ENCODE measurements at regions of chr1 and their contacts with region 1.

Region 1: DNA sequence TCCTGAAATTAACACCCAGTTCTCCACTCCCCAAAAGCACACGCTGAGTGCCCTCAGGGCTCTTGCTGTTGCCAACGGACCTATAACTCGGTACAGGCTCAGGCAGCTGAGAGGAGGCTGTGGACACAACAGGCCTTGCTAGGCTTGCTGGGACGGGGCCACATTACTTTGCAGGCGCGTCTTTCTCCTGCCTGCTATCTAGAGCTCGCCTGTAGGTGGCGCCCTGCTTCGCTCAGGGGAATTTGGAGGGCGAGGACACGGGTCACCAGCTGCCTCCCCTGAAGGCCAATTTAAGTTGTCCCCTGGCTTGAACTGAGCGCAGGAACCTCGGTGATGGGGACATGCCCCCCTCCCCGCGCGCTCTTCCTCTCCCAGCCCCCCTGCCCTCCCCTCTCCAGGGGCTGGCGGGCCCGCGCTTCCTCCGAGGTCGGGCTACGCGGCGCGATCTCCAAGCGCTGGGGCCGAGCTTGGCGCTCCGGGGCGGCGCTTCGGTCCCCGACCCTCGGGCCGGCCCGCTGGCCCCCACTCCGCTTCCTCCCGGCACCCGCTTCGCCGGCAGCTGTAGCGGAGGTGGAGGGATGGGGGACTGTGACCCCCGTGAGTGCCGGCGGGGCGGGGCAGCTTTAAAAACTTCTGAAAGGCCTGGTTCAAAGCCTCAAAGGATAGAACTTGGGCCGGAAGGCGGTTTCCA is 32.4 kb upstream of the NFIA start:
- DNase-seq: peak; percentile 94
- H3K4me3 Mint-ChIP-seq: peak overlapping the region; percentile 71
- H3K27ac Mint-ChIP-seq: no peak overlapping the region
- H3K4me1 Mint-ChIP-seq: peaks cover 24% of the 10 kb centered on the region
- H3K27me3 Mint-ChIP-seq: peaks cover 37% of the 10 kb centered on the region

Region 2: GRCh38 chr1:60298290-60298689 is 751.7 kb before region 1 on chr1:
- CTCF ChIA-PET with region 1: no interaction called
- POLR2A ChIA-PET with region 1: no interaction called
- intact Hi-C with region 1: no loop called
- DNase-seq: no peak
- H3K4me3 Mint-ChIP-seq: no peak overlapping the region
- H3K27ac Mint-ChIP-seq: no peak overlapping the region
- H3K4me1 Mint-ChIP-seq: no peaks in the 10 kb centered on the region
- H3K27me3 Mint-ChIP-seq: no peaks in the 10 kb centered on the region

Region 3: GRCh38 chr1:60911966-60912697 is 137.9 kb before region 1 on chr1:
- CTCF ChIA-PET with region 1: no interaction called
- POLR2A ChIA-PET with region 1: no interaction called
- intact Hi-C with region 1: no loop called
- DNase-seq: no peak
- H3K4me3 Mint-ChIP-seq: no peak overlapping the region
- H3K27ac Mint-ChIP-seq: no peak overlapping the region
- H3K4me1 Mint-ChIP-seq: no peaks in the 10 kb centered on the region
- H3K27me3 Mint-ChIP-seq: peaks cover 9% of the 10 kb centered on the region

Region 4: GRCh38 chr1:60978421-60979357 is 71.3 kb before region 1 on chr1:
- CTCF ChIA-PET with region 1: interaction called, 13 read pairs
- POLR2A ChIA-PET with region 1: interaction called, 4 read pairs
- intact Hi-C with region 1: no loop called
- DNase-seq: peak; percentile 58
- H3K4me3 Mint-ChIP-seq: no peak overlapping the region
- H3K27ac Mint-ChIP-seq: no peak overlapping the region
- H3K4me1 Mint-ChIP-seq: peaks cover 2% of the 10 kb centered on the region
- H3K27me3 Mint-ChIP-seq: peaks cover 3% of the 10 kb centered on the region

Region 5: DNA sequence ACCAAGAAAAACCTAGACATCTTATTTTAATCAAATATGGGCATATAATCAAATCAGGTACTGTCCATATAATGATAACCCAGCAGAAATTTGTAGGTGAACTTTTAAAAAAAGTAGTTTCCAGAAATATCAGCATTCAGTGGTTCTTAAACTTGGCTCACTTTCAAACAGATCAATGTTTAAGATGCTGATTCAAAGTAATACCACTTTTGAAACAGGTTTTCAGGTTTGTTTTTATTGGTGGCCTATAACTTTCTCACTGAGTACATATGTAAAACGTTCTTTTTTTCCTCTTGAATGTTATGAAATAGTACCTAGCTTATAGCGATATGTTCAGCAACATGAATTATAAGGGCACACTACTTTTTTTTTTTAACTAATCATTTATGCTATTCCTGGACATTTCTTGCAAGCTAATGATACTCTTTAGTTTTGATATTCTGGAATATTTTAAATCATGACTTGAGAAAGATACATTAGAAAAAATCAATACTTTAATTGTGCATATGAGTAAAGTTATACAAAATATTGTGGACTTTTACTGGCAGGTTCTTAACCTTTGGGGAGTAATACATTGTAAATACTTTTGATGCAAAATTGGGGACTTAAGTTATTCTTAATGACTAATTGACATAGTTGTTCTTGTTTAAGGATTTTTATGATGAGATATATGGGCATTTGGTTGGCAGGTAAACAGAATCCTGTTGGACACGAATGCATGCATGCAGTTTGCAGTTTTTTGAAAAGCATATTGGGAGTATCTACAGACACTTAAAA is 35.4 kb after region 1 on chr1:
- CTCF ChIA-PET with region 1: interaction called, 16 read pairs
- POLR2A ChIA-PET with region 1: interaction called, 9 read pairs
- intact Hi-C with region 1: no loop called
- DNase-seq: no peak
- H3K4me3 Mint-ChIP-seq: no peak overlapping the region
- H3K27ac Mint-ChIP-seq: no peak overlapping the region
- H3K4me1 Mint-ChIP-seq: peaks cover 25% of the 10 kb centered on the region
- H3K27me3 Mint-ChIP-seq: peaks cover 3% of the 10 kb centered on the region

Region 6: GRCh38 chr1:61264825-61265242 is 214.8 kb after region 1 on chr1:
- CTCF ChIA-PET with region 1: interaction called, 12 read pairs
- POLR2A ChIA-PET with region 1: no interaction called
- intact Hi-C with region 1: loop called (anchors 10 kb)
- DNase-seq: no peak
- H3K4me3 Mint-ChIP-seq: no peak overlapping the region
- H3K27ac Mint-ChIP-seq: no peak overlapping the region
- H3K4me1 Mint-ChIP-seq: peaks cover 25% of the 10 kb centered on the region
- H3K27me3 Mint-ChIP-seq: peaks cover 2% of the 10 kb centered on the region

Region 7: DNA sequence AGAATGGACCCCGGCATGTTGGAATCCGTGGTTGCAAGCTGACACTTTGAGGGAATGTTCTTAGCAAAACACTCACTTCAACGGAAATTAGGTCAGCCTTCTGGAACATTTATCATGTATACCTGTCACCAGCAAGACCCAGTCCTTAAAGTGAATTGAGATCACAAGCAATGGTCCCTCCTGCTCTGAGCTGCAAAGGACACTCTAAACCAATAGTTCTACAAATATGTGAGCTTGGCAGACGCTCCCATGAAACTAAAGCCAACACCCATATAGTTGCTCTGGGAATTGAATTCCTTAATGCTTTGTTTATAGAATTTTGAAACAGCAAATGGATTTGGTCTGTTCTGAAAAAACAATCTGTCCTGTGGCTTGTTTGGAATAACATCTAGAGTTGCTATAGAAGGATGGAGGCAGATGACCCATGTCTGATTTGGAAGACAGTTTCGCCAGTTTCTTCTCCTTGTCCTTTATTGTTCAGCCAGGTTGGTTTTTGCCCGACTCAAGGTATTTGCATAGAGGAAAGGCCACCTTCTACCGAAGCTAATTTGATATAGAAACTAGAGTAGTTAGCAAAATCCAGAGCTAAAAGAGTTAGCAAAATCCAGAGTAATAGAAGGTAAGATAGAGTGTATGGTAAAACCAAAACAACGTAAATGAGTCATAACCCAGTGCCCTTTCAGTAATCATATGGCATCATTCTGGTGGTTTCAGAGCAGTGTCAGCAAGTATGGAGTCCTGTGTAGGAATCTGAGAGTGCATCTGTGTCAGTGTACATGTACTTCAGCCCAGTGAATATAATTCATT is 268.5 kb after region 1 on chr1:
- CTCF ChIA-PET with region 1: interaction called, 10 read pairs
- POLR2A ChIA-PET with region 1: interaction called, 6 read pairs
- intact Hi-C with region 1: no loop called
- DNase-seq: peak; percentile 44
- H3K4me3 Mint-ChIP-seq: peak overlapping the region; percentile 42
- H3K27ac Mint-ChIP-seq: peak overlapping the region; percentile 88
- H3K4me1 Mint-ChIP-seq: peaks cover 48% of the 10 kb centered on the region
- H3K27me3 Mint-ChIP-seq: peaks cover 2% of the 10 kb centered on the region

Region 8: DNA sequence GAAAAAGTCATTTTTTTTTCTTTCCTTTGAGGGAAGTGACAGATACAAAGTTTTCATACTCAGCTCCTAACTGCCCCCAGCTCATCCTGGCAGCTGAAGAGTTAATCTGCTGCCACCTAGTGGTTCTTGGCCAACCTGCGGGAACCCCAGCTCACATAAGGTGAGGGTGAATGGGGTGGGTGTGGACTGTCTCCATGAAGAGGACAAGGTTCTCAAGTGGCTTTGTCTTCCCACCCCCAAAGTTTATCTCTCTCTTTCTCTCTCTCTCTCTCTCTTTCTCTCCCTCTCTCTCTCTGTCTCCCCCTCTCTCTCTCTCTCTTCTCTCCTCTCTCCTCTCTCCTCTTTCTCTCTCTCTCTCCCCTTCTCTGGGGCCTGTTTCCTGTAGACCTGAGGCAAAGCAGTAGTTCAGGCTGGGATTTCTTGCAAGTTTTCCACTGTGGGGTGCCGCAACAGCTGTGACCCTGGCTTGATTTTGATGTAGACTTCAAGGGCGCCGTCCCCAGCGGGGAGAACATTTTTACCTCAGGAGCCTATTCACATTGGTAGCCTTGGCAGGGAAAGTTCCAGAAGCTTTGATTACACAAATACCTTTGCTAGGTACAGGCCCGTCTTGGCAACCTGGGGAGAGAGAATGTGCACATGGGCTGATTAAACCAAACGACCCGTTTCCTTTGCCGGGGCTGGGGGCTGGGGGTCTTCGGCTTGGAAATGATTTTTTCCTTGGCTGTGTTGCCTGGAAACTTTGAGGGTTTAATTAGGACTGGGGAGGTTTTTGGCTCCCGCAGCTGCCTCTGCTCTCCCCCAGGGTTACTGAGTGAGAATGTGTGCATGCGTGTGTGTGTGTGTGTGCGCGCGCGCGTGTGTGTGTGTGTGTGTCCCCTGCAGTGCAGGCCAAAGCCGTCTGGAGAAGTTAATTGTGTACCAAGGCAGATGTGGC is 539.0 kb after region 1 on chr1:
- CTCF ChIA-PET with region 1: interaction called, 37 read pairs
- POLR2A ChIA-PET with region 1: no interaction called
- intact Hi-C with region 1: loop called (anchors 2 kb)
- DNase-seq: peak; percentile 79
- H3K4me3 Mint-ChIP-seq: no peak overlapping the region
- H3K27ac Mint-ChIP-seq: no peak overlapping the region
- H3K4me1 Mint-ChIP-seq: no peaks in the 10 kb centered on the region
- H3K27me3 Mint-ChIP-seq: peaks cover 4% of the 10 kb centered on the region

Measured in activated CD4-positive, alpha-beta memory T cell treated with anti-CD3 and anti-CD28 coated beads for 36 hours (primary cell).